H1 (cell line): ENCODE measurements at regions of chr2 and their contacts with region 1.

Region 1: GRCh38 chr2:112048887-112049286 is 6.2 kb upstream of the TMEM87B start:
- DNase-seq: no peak
- H3K4me3 ChIP-seq: no peak overlapping the region
- H3K27ac ChIP-seq: no peak overlapping the region
- H3K4me1 ChIP-seq: peaks cover 0 to 9% (median 4%) of the 10 kb centered on the region in 4 experiments; a peak in 4 of 7 replicates
- H3K27me3 ChIP-seq: no peaks in the 10 kb centered on the region
- CTCF ChIP-seq: peak in 2 of 3 experiments; percentile 38 to 56; a peak in 2 of 4 replicates
- EP300 ChIP-seq: no peak
- POLR2A ChIP-seq: no peak
- RAD21 ChIP-seq: peak; percentile 61 to 68

Region 2: DNA sequence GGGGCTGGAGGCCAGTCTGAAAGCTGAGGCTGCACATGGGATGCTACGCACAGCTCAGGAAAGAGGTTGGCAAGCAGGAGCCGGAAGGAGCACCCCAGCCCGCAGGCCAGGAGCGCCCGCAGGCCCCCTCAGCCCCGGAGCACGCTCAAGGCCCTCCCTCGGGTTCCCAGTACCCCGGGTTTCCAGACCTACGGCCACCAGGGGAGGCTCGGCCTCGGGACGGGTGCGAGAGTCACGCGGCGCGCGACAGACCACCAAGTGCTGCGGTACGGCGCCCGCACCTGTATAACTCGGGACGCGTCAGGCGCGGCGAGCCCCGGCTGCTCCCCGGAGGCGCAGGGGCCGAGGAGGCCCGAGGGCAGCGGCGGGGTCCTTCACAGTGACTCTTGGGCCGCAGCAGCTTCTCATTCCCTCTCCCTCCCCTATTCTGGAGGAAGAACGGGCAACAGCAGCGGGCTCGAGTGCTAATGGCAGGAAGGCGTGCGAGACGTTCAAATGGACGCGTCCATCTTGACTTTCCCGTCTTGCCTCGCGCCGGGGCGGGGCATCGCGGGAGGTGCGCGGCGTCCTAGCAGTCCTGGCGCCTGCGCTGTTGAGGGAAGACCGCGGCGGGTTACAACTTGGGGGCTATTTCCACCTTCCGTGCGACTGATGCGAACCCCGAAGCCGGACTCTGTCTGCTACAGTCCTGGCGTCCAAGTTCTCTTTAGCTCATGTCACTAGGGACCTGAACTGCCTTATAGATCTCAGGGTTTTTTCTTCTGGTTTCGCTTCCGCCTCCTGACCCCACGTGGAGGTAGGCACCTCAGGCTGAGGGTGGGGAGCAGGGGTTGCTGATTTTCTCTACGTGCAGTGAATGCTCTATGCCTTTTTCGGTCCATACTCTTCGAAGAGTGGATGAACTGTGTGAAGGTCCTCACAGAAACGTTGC is 165.0 kb before region 1 on chr2 and contains the start of gene ANAPC1:
- CTCF ChIA-PET with region 1: interaction called, 54 read pairs
- POLR2A ChIA-PET with region 1: interaction called, 5 read pairs
- DNase-seq: peak in 1 of 2 experiments; percentile 93
- H3K4me3 ChIP-seq: peak within 1 kb of the TSS; percentile 78 to 96 (median 88)
- H3K27ac ChIP-seq: peak within 1 kb of the TSS; percentile 87
- H3K4me1 ChIP-seq: no peaks in the 10 kb centered on the region
- H3K27me3 ChIP-seq: no peaks in the 10 kb centered on the region
- CTCF ChIP-seq: no peak
- EP300 ChIP-seq: no peak
- POLR2A ChIP-seq: peak; percentile 82 to 94
- RAD21 ChIP-seq: no peak
- total RNA-seq, gene ANAPC1: 107 and 110 TPM in 2 replicates

Region 3: DNA sequence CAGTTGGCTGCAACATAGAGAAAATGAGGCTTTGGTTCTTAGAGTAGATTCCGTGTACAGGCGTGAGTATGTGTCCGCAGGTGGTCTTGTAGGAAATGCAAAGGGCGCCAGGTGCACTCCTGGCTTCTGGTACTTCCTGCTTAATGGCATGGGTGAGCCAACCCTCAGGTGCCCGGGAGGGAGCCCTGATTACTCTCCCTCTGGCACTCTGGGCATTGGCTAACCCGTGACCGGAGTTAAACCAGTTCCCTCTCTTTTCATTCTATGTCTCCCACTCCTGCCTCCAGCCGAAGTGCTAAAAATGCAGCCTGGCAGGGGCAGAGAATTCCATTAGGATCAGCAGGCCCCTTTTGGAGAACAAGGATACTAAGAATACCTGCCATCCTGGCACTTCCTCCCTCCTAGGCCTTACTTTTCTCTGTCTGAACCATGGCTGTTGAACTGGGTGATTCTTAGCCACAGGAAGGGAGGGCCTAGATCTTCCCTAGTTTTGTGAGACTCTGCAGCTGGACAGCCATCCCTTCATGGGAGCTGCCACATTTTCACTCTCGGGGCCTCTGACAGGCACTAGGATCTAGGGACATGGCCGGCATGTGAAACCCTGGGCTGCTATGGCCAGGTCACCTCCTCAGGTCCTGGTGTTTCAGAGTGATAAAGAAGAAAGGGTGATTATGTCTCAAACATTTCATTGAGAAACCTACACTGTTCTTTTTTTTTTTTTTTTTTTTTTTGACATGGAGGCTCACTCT is 144.0 kb before region 1 on chr2:
- CTCF ChIA-PET with region 1: interaction called, 12 read pairs
- POLR2A ChIA-PET with region 1: no interaction called
- DNase-seq: no peak
- H3K4me3 ChIP-seq: no peak overlapping the region
- H3K27ac ChIP-seq: no peak overlapping the region
- H3K4me1 ChIP-seq: peaks cover 2 to 16% (median 4%) of the 10 kb centered on the region in 4 experiments; a peak in 6 of 7 replicates
- H3K27me3 ChIP-seq: peaks cover 0 to 10% (median 2%) of the 10 kb centered on the region in 4 experiments; a peak in 3 of 7 replicates
- CTCF ChIP-seq: no peak
- EP300 ChIP-seq: no peak
- POLR2A ChIP-seq: no peak
- RAD21 ChIP-seq: no peak

Region 4: DNA sequence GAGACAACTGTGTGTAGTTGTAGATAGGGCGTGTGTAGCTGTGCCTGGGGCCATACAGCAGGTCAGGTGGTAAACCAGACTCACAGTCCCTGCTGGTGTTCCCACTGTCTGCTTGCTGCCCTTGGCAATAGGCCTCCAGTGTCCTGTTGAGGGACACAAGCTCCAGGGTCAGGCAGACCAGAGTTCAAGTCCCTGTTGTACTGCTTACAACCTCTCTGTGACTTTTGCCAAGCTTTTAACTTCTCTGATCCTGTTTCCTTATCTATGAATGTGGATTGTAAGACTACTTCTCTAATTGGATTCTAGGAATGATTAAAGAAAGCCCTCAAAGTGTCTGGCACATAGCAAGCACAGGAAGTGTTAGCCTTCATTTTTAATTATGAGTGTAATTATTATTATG is 81.9 kb before region 1 on chr2:
- CTCF ChIA-PET with region 1: no interaction called
- POLR2A ChIA-PET with region 1: no interaction called
- DNase-seq: no peak
- H3K4me3 ChIP-seq: no peak overlapping the region
- H3K27ac ChIP-seq: no peak overlapping the region
- H3K4me1 ChIP-seq: no peaks in the 10 kb centered on the region
- H3K27me3 ChIP-seq: no peaks in the 10 kb centered on the region
- CTCF ChIP-seq: no peak
- EP300 ChIP-seq: no peak
- POLR2A ChIP-seq: no peak
- RAD21 ChIP-seq: no peak

Region 5: GRCh38 chr2:112010751-112011150 is 38.1 kb before region 1 on chr2:
- CTCF ChIA-PET with region 1: no interaction called
- POLR2A ChIA-PET with region 1: no interaction called
- DNase-seq: no peak
- H3K4me3 ChIP-seq: no peak overlapping the region
- H3K27ac ChIP-seq: no peak overlapping the region
- H3K4me1 ChIP-seq: no peaks in the 10 kb centered on the region
- H3K27me3 ChIP-seq: no peaks in the 10 kb centered on the region
- CTCF ChIP-seq: no peak
- EP300 ChIP-seq: no peak
- POLR2A ChIP-seq: no peak
- RAD21 ChIP-seq: no peak

Region 6: GRCh38 chr2:112021781-112022231 is 27.1 kb before region 1 on chr2:
- CTCF ChIA-PET with region 1: interaction called, 14 read pairs
- POLR2A ChIA-PET with region 1: no interaction called
- DNase-seq: no peak
- H3K4me3 ChIP-seq: no peak overlapping the region
- H3K27ac ChIP-seq: no peak overlapping the region
- H3K4me1 ChIP-seq: no peaks in the 10 kb centered on the region
- H3K27me3 ChIP-seq: no peaks in the 10 kb centered on the region
- CTCF ChIP-seq: no peak
- EP300 ChIP-seq: no peak
- POLR2A ChIP-seq: no peak
- RAD21 ChIP-seq: no peak

Region 7: DNA sequence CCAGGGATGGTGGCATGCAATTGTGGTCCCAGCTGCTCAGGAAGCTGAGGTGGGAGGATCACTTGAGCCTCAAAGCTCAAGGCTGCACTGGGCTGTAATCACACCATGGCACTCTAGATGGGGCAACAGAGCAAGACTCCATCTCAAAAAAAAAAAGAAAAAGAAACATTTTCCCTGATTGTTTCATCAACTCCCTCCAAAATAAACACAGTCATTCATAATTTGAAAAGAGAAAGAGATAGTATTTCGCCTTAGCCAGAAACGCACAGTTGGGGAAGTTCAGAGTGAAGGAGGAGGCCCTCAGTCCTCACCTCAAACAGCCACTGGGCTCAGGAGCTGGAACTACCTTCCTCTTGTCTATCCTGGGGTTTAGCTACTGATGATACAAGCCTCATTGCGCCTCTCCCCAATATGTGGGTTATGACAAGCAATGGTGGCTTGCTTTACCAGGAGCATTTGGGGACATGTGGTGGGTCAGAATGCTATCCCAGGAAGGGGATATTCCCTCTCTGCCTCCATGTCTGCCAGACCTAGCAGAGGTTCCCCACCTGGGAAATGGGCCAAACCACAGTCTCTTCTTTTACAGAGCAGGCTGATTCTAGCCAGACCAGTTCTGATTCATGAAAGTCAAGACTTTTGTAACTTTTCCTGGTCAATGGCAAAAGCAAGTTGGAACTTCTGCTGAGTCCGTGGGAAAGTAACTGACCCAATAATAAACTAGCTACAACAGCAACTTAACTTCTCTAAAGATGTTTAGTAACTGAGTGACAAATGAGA is 16.0 kb before region 1 on chr2:
- CTCF ChIA-PET with region 1: interaction called, 12 read pairs
- POLR2A ChIA-PET with region 1: no interaction called
- DNase-seq: peak in 1 of 2 experiments; percentile 27
- H3K4me3 ChIP-seq: no peak overlapping the region
- H3K27ac ChIP-seq: no peak overlapping the region
- H3K4me1 ChIP-seq: peaks cover 0 to 9% (median 5%) of the 10 kb centered on the region in 4 experiments; a peak in 4 of 7 replicates
- H3K27me3 ChIP-seq: no peaks in the 10 kb centered on the region
- CTCF ChIP-seq: no peak
- EP300 ChIP-seq: no peak
- POLR2A ChIP-seq: no peak
- RAD21 ChIP-seq: no peak

Region 8: GRCh38 chr2:112081262-112081661 is 32.4 kb after region 1 on chr2:
- CTCF ChIA-PET with region 1: no interaction called
- POLR2A ChIA-PET with region 1: no interaction called
- DNase-seq: no peak
- H3K4me3 ChIP-seq: no peak overlapping the region
- H3K27ac ChIP-seq: no peak overlapping the region
- H3K4me1 ChIP-seq: no peaks in the 10 kb centered on the region; a peak in 1 of 7 replicates
- H3K27me3 ChIP-seq: no peaks in the 10 kb centered on the region
- CTCF ChIP-seq: no peak
- EP300 ChIP-seq: no peak
- POLR2A ChIP-seq: no peak
- RAD21 ChIP-seq: no peak

Region 9: DNA sequence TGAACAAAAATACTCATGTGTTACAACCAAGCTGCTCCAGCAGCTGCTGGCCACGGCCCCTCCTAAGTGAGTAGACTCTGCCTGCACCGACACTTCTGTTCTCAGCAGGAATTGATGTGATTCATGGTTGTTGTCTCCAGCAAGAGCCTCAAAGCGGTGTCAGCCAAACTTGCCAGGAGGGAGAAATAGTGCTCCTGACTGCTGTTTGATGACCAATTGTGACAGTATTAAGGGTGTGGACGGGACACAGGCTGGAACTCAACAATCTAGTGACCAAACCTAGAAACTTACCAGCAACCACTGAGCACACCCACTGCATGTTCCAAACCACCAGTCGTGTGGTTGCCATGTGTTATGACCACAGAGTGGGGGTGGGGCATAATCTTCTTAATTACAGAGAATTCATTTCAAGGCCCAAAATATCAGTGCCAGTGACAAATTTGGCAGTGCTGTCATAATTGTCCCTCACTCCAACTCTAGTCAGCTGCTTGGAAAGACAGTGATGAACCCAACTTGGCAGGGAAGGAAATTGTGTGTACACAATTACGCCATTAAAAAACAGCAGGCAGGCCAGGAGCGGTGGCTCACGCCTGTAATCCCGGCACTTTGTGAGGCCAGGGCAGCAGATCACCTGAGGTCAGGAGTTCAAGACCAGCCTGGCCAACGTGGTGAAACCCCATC is 119.7 kb after region 1 on chr2:
- CTCF ChIA-PET with region 1: no interaction called
- POLR2A ChIA-PET with region 1: no interaction called
- DNase-seq: no peak
- H3K4me3 ChIP-seq: no peak overlapping the region
- H3K27ac ChIP-seq: no peak overlapping the region
- H3K4me1 ChIP-seq: no peaks in the 10 kb centered on the region
- H3K27me3 ChIP-seq: no peaks in the 10 kb centered on the region
- CTCF ChIP-seq: no peak
- EP300 ChIP-seq: no peak
- POLR2A ChIP-seq: no peak
- RAD21 ChIP-seq: no peak